ENCODE measurements at regions of chr11 and their contacts with region 1.

Region 1: GRCh38 chr11:65569973-65570918 is at the start of gene ZNRD2:
- DNase-seq: peak; percentile 99
- ATAC-seq: peak; percentile 67
- H3K4me3 ChIP-seq: peak within 1 kb of the TSS; percentile 58 to 89 (median 83)
- H3K4me3 Mint-ChIP-seq: peak within 1 kb of the TSS; percentile 99
- H3K27ac ChIP-seq: peak within 1 kb of the TSS; percentile 96 to 97
- H3K27ac Mint-ChIP-seq: peak within 1 kb of the TSS; percentile 99
- H3K4me1 ChIP-seq: peaks cover 58 to 77% of the 10 kb centered on the region in 2 donors
- H3K4me1 Mint-ChIP-seq: peaks cover 75% of the 10 kb centered on the region
- H3K27me3 ChIP-seq: no peaks in the 10 kb centered on the region
- H3K27me3 Mint-ChIP-seq: no peaks in the 10 kb centered on the region
- CTCF ChIP-seq: peak; percentile 48
- total RNA-seq, gene ZNRD2: 22.1 and 24.0 TPM in 2 replicates

Region 2: DNA sequence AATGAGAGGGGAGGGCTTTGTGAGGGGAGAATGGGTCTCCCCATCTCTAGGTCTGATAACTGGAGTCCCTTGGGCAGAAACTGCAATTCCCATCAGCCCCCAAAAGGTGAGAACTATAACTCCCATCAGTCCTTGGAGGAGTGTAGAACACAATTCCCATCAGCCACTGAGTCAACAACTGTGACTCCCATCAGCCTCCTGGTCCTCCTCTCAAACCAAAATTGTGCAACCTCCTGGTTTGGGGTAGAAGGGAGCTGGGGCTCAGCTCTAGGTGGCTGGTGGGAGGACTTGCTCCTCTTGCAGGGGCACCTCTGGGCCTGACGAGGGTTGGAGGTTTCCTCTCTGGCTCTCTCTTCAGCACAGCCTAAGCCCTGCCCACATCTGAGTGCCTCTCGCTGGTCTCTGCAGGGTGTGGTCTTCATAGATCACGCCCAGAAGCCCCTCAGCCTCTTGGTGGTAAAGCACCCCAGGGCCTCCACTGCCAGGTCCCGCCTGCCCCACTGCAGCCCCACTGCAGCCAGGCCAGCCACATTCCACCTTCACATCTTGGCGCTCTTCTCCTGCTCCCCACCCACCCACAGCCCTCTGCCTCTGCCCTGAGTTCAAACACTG is 960.7 kb before region 1 on chr11:
- CTCF ChIA-PET with region 1: no interaction called
- POLR2A ChIA-PET with region 1: no interaction called
- intact Hi-C with region 1: no loop called
- DNase-seq: no peak
- ATAC-seq: no peak
- H3K4me3 ChIP-seq: no peak overlapping the region
- H3K4me3 Mint-ChIP-seq: no peak overlapping the region
- H3K27ac ChIP-seq: no peak overlapping the region
- H3K27ac Mint-ChIP-seq: no peak overlapping the region
- H3K4me1 ChIP-seq: peaks cover 0 to 3% of the 10 kb centered on the region in 2 donors
- H3K4me1 Mint-ChIP-seq: peaks cover 3% of the 10 kb centered on the region
- H3K27me3 ChIP-seq: no peaks in the 10 kb centered on the region
- H3K27me3 Mint-ChIP-seq: peaks cover 9% of the 10 kb centered on the region
- CTCF ChIP-seq: no peak

Region 3: GRCh38 chr11:64742889-64743590 is 827.2 kb before region 1 on chr11:
- CTCF ChIA-PET with region 1: no interaction called
- POLR2A ChIA-PET with region 1: no interaction called
- intact Hi-C with region 1: loop called (anchors 10 kb)
- DNase-seq: peak; percentile 88
- ATAC-seq: peak; percentile 11
- H3K4me3 ChIP-seq: peak overlapping the region; percentile 48 to 99 (median 86)
- H3K4me3 Mint-ChIP-seq: peak overlapping the region; percentile 97
- H3K27ac ChIP-seq: peak overlapping the region; percentile 84 to 91
- H3K27ac Mint-ChIP-seq: peak overlapping the region; percentile 86
- H3K4me1 ChIP-seq: peaks cover 22 to 33% of the 10 kb centered on the region in 2 donors
- H3K4me1 Mint-ChIP-seq: peaks cover 49% of the 10 kb centered on the region
- H3K27me3 ChIP-seq: no peaks in the 10 kb centered on the region
- H3K27me3 Mint-ChIP-seq: no peaks in the 10 kb centered on the region
- CTCF ChIP-seq: peak; percentile 86

Region 4: DNA sequence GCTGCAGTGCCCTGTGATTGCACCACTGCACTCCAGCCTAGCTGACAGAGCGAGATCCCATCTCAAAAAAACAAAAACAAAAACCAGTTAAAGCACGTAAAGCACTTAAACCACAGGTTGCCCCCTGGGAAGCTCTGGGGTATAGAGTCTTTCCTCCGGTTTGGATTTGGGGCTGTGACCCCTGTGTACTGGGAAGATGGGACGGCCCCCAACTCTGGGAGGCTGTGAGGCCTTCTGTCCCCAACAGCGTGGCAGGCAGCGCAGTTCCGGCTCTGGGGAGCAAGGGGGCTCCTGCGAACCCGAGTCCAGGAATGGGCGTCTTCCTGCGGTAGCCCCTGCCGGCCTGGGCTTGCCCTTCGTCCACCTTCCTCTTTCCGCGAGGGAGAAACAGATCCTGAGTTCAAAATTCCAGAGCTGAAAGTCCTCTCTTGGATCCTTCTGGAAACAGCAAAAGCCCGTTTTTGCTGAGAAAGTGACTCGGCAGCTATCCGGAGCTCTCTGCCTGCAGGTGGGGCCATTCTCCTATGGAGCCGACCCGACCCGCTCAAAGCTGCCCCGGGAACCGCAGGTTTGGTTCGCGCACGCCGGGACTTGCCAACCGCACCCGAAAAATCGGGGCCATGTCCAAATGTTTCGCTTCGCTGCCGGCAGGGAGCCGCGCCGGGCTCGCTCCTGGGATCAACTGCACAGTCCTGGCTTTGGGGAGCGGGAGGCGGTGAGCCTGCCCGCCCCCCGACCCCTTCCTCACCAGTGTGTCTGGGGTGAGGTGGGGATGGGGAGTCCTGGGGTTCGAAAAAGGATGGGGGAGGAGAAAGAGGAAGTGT is 344.8 kb before region 1 on chr11:
- CTCF ChIA-PET with region 1: no interaction called
- POLR2A ChIA-PET with region 1: no interaction called
- intact Hi-C with region 1: no loop called
- DNase-seq: peak; percentile 73
- ATAC-seq: peak; percentile 81
- H3K4me3 ChIP-seq: peak overlapping the region; percentile 33 to 62 (median 45)
- H3K4me3 Mint-ChIP-seq: peak overlapping the region; percentile 91
- H3K27ac ChIP-seq: no peak overlapping the region
- H3K27ac Mint-ChIP-seq: no peak overlapping the region
- H3K4me1 ChIP-seq: peaks cover 14 to 17% of the 10 kb centered on the region in 2 donors
- H3K4me1 Mint-ChIP-seq: peaks cover 12% of the 10 kb centered on the region
- H3K27me3 ChIP-seq: no peaks in the 10 kb centered on the region
- H3K27me3 Mint-ChIP-seq: no peaks in the 10 kb centered on the region
- CTCF ChIP-seq: peak; percentile 69

Region 5: GRCh38 chr11:65403607-65404121 is 166.6 kb before region 1 on chr11:
- CTCF ChIA-PET with region 1: interaction called, 3 read pairs
- POLR2A ChIA-PET with region 1: interaction called, 3 read pairs
- intact Hi-C with region 1: loop called (anchors 1 kb)
- DNase-seq: peak; percentile 91
- ATAC-seq: peak; percentile 68
- H3K4me3 ChIP-seq: peak overlapping the region in 2 of 5 experiments; percentile 10 to 22
- H3K4me3 Mint-ChIP-seq: peak overlapping the region; percentile 71
- H3K27ac ChIP-seq: peak overlapping the region; percentile 81 to 86
- H3K27ac Mint-ChIP-seq: peak overlapping the region; percentile 96
- H3K4me1 ChIP-seq: peaks cover 34 to 57% of the 10 kb centered on the region in 2 donors
- H3K4me1 Mint-ChIP-seq: peaks cover 40% of the 10 kb centered on the region
- H3K27me3 ChIP-seq: no peaks in the 10 kb centered on the region
- H3K27me3 Mint-ChIP-seq: no peaks in the 10 kb centered on the region
- CTCF ChIP-seq: no peak

Region 6: GRCh38 chr11:65551572-65552398 is 18.5 kb before region 1 on chr11:
- CTCF ChIA-PET with region 1: interaction called, 86 read pairs
- POLR2A ChIA-PET with region 1: interaction called, 11 read pairs
- intact Hi-C with region 1: loop called (anchors 1 kb)
- DNase-seq: peak; percentile 85
- ATAC-seq: peak; percentile 85
- H3K4me3 ChIP-seq: no peak overlapping the region
- H3K4me3 Mint-ChIP-seq: peak overlapping the region; percentile 61
- H3K27ac ChIP-seq: no peak overlapping the region
- H3K27ac Mint-ChIP-seq: peak overlapping the region; percentile 89
- H3K4me1 ChIP-seq: peaks cover 42 to 64% of the 10 kb centered on the region in 2 donors
- H3K4me1 Mint-ChIP-seq: peaks cover 66% of the 10 kb centered on the region
- H3K27me3 ChIP-seq: no peaks in the 10 kb centered on the region
- H3K27me3 Mint-ChIP-seq: no peaks in the 10 kb centered on the region
- CTCF ChIP-seq: peak; percentile 76

Region 7: GRCh38 chr11:65593518-65594298 is 23.5 kb after region 1 on chr11:
- CTCF ChIA-PET with region 1: interaction called, 97 read pairs
- POLR2A ChIA-PET with region 1: interaction called, 45 read pairs
- intact Hi-C with region 1: loop called (anchors 1 kb)
- DNase-seq: peak; percentile 66
- ATAC-seq: peak; percentile 48
- H3K4me3 ChIP-seq: no peak overlapping the region
- H3K4me3 Mint-ChIP-seq: no peak overlapping the region
- H3K27ac ChIP-seq: no peak overlapping the region
- H3K27ac Mint-ChIP-seq: peak overlapping the region; percentile 46
- H3K4me1 ChIP-seq: peaks cover 14 to 30% of the 10 kb centered on the region in 2 donors
- H3K4me1 Mint-ChIP-seq: peaks cover 24% of the 10 kb centered on the region
- H3K27me3 ChIP-seq: no peaks in the 10 kb centered on the region
- H3K27me3 Mint-ChIP-seq: no peaks in the 10 kb centered on the region
- CTCF ChIP-seq: peak; percentile 74

Region 8: DNA sequence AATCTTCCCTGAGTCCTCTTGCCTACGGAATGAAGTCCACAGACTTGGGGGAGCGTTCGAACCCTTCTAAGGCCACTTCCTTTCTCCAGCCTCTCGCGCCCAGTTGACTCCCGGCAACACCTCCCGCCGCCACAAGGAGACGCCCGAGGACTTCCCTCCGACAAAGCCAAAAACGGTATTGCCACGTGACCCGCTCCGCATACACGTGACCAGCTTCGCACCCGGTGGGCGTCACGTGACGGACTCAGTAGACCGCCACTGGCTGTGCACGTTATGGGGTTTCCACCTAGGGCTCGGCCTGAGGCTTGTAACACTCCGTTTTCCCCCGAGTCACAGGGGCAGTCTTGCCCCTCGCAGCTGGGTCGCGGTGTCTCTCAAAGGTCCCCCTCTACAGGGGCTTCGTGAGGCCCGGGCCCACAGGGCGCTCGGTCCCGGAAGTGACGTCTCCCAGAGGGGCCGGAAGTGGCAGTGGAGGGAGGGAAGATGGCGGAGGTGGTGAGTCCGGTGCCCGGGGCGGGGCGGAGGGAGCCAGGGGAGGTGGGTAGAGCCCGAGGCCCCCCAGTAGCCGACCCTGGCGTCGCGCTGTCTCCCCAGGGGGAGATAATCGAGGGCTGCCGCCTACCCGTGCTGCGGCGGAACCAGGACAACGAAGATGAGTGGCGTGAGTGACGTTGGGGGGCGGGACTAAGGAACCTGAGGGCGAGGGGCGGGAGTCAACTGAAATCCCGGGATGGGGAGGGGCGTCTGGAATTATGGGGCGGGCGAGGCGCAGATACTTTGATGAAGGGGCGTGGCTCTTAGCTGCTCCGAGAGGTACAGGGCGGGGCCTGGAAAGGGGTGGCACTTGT is 141.8 kb after region 1 on chr11 and contains the start of gene KAT5:
- CTCF ChIA-PET with region 1: interaction called, 5 read pairs
- POLR2A ChIA-PET with region 1: interaction called, 3 read pairs
- intact Hi-C with region 1: loop called (anchors 2 kb)
- DNase-seq: peak; percentile 100
- ATAC-seq: peak; percentile 82
- H3K4me3 ChIP-seq: peak within 1 kb of the TSS; percentile 41 to 94 (median 84)
- H3K4me3 Mint-ChIP-seq: peak within 1 kb of the TSS; percentile 92
- H3K27ac ChIP-seq: peak within 1 kb of the TSS; percentile 98 to 99
- H3K27ac Mint-ChIP-seq: peak within 1 kb of the TSS; percentile 99
- H3K4me1 ChIP-seq: peaks cover 10 to 17% of the 10 kb centered on the region in 2 donors
- H3K4me1 Mint-ChIP-seq: peaks cover 27% of the 10 kb centered on the region
- H3K27me3 ChIP-seq: no peaks in the 10 kb centered on the region
- H3K27me3 Mint-ChIP-seq: no peaks in the 10 kb centered on the region
- CTCF ChIP-seq: peak; percentile 98
- total RNA-seq, gene KAT5: 134 and 142 TPM in 2 replicates